ENCODE measurements at regions of chr1 and their contacts with region 1.

Region 1: DNA sequence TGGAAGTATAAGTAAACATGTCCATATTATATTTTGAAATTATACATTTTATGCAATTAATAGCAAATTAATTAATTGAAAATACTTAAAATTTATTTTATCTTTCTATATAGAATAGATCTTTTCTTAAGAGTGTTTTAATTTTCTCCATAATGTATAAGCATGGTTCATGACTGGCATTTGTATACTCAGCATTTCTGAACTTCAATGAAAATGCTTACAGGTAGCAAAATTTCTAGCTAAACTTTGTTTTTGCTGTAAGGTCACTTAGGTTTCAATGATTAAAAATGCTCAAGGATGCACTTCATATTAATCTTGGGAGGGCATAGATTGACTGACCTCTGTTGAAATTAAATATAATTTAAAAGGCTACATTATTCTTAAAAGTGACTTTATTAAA is 1108.1 kb downstream of the BRINP3 start:
- DNase-seq: no peak
- H3K4me3 Mint-ChIP-seq: no peak overlapping the region
- H3K27ac Mint-ChIP-seq: no peak overlapping the region
- H3K4me1 Mint-ChIP-seq: no peaks in the 10 kb centered on the region
- H3K27me3 Mint-ChIP-seq: no peaks in the 10 kb centered on the region

Region 2: DNA sequence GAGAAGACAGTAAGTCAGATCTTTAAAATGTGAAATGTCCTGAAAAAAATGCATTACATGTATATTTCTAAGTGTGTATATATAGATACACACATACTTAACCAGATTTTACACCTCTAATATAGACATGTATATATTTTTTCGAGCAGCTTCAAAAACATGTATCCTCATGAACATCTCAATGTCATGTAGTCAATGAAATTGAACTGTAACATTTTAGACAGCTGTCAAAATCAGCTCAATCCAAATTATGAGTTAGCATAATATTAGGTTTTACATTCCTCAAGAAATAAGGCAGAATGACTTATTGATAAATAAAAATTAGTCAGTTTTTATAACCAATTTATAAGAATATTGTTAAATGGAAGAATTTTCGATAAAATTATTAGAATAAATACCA is 442.3 kb after region 1 on chr1:
- CTCF ChIA-PET with region 1: no interaction called
- intact Hi-C with region 1: loop called (anchors 5 kb)
- DNase-seq: no peak
- H3K4me3 Mint-ChIP-seq: no peak overlapping the region
- H3K27ac Mint-ChIP-seq: no peak overlapping the region
- H3K4me1 Mint-ChIP-seq: no peaks in the 10 kb centered on the region
- H3K27me3 Mint-ChIP-seq: no peaks in the 10 kb centered on the region